Activated CD4-positive, alpha-beta memory T cell treated with anti-CD3 and anti-CD28 coated beads for 36 hours (primary cell): ENCODE measurements at regions of chr19 and their contacts with region 1.

Region 1: GRCh38 chr19:17226002-17226933 is at the start of gene OCEL1:
- DNase-seq: peak; percentile 98
- H3K4me3 Mint-ChIP-seq: peak within 1 kb of the TSS; percentile 91
- H3K27ac Mint-ChIP-seq: peak within 1 kb of the TSS; percentile 97
- H3K4me1 Mint-ChIP-seq: peaks cover 6% of the 10 kb centered on the region
- H3K27me3 Mint-ChIP-seq: no peaks in the 10 kb centered on the region
- total RNA-seq, gene OCEL1: 17.6 to 17.9 TPM

Region 2: GRCh38 chr19:17266975-17267788 is 40.9 kb after region 1 on chr19 and contains the start of gene BABAM1:
- CTCF ChIA-PET with region 1: no interaction called
- POLR2A ChIA-PET with region 1: interaction called, 5 read pairs
- intact Hi-C with region 1: loop called (anchors 2 kb)
- DNase-seq: peak; percentile 97
- H3K4me3 Mint-ChIP-seq: peak within 1 kb of the TSS; percentile 90
- H3K27ac Mint-ChIP-seq: peak within 1 kb of the TSS; percentile 91
- H3K4me1 Mint-ChIP-seq: peaks cover 21% of the 10 kb centered on the region
- H3K27me3 Mint-ChIP-seq: peaks cover 2% of the 10 kb centered on the region
- total RNA-seq, gene BABAM1: 110 TPM

Region 3: DNA sequence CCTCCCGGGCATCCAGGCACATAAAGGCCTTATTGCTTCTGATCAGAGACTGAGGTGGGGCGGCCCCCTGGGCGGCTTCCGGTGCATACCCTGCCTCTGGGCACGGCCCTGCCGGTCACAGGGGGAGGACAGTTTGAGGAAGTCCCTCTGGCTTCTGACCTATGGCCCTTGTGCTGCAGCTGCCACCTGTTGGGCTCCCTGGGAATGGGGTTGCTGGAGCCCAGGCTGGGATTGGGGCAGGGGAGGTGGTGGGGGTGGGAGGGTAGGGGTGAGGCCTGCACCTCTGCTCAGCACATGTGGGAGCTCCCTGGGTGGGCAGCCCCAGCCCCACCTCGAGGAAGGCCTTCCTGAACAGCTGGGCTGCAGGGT is 97.7 kb after region 1 on chr19:
- CTCF ChIA-PET with region 1: no interaction called
- POLR2A ChIA-PET with region 1: no interaction called
- intact Hi-C with region 1: no loop called
- DNase-seq: peak; percentile 49
- H3K4me3 Mint-ChIP-seq: no peak overlapping the region
- H3K27ac Mint-ChIP-seq: no peak overlapping the region
- H3K4me1 Mint-ChIP-seq: no peaks in the 10 kb centered on the region
- H3K27me3 Mint-ChIP-seq: no peaks in the 10 kb centered on the region